PC-9 (cell line): ENCODE measurements at regions of chr9 and their contacts with region 1.

Region 1: DNA sequence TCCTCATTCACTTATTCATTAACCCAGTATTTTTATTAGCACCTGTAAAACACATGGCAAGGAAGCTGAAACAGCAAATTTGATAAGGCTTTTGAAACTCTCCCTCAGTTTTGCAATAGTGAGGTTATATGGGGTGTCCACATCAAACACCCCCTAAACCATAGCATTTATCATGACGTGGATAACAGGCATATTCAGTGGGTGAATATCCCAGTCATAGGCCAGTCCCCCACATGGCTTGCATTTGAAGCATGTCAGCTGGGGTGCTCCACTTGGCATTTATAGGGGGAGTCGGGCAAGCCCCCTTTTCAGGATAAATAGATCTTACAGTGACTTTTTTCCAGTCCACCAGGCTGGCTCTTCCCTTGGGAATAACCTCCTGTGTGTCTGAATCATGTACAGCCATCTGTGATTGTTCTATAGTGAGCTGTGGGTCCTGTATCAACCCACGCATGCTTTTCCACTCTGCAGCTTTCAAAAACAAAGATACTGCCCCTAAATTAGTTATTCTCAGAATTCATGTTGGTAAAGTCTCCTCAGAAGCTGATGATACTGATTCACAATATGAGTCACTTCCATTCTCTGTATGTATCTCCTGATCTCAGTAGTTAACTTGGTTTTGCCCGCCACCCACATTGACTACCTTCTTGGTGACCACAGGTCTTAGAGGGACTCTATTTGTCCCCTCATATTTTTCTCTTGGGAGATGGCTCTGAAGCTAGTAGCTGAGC is 84.4 kb upstream of the SPIN1 start:
- DNase-seq: no peak
- H3K4me3 ChIP-seq: no peak overlapping the region
- H3K27ac ChIP-seq: no peak overlapping the region
- H3K4me1 ChIP-seq: no peaks in the 10 kb centered on the region
- H3K27me3 ChIP-seq: no peaks in the 10 kb centered on the region
- CTCF ChIP-seq: no peak

Region 2: DNA sequence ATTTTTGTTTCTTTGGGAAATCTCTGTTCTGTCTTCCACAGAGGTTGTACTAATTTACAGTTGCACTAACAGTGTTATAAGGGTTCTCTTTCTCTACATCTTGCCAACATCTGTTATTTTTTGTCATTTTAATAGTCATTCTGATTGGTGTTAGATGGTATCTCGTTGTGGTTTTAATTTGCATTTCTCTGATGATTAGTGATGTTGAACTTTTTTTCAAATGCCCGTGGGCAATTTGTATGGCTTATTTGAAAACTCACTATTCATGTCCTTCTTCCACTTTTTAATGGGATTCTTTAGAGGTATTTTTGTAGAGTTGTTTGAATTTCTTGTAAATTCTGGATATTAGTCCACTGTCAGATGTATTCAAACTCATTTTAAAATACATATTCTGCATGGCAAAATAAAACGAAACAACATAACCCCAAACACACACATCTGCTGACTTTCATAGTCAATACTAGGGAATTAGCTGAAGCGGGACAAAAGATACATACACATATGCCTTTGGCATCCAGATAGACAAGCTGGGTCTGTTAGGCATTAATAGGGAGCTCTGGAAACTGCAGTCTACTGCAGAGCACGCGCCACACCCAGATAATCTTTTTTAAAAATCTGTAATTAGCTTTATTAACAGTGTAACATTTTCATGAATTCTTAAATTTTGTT is 159.8 kb before region 1 on chr9:
- CTCF ChIA-PET with region 1: no interaction called
- POLR2A ChIA-PET with region 1: no interaction called
- intact Hi-C with region 1: no loop called
- DNase-seq: no peak
- H3K4me3 ChIP-seq: no peak overlapping the region
- H3K27ac ChIP-seq: no peak overlapping the region
- H3K4me1 ChIP-seq: no peaks in the 10 kb centered on the region
- H3K27me3 ChIP-seq: no peaks in the 10 kb centered on the region
- CTCF ChIP-seq: no peak

Region 3: DNA sequence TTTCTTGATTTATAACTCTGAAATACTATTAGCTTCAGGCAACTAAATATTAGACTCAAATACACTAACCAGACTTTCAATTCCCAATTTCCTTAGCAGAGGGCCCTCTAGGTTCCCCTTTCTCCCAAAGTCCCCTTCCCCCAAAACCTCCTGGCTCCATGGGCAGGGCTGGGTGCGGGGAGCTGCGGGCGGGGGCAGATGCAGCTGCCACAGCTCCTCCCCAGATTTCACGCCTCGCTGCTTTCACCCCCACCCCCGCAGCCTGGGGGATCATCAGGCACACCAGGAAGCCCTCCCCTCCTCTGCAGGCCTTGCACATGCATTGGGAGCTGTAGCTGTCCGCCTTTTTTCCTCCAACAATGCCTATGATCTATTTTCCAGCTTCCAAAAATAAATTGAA is 82.8 kb before region 1 on chr9:
- CTCF ChIA-PET with region 1: no interaction called
- POLR2A ChIA-PET with region 1: interaction called, 12 read pairs
- intact Hi-C with region 1: no loop called
- DNase-seq: no peak
- H3K4me3 ChIP-seq: no peak overlapping the region
- H3K27ac ChIP-seq: no peak overlapping the region
- H3K4me1 ChIP-seq: no peaks in the 10 kb centered on the region
- H3K27me3 ChIP-seq: no peaks in the 10 kb centered on the region
- CTCF ChIP-seq: no peak

Region 4: GRCh38 chr9:88236531-88237478 is 67.1 kb before region 1 on chr9:
- CTCF ChIA-PET with region 1: no interaction called
- POLR2A ChIA-PET with region 1: no interaction called
- intact Hi-C with region 1: no loop called
- DNase-seq: no peak
- H3K4me3 ChIP-seq: no peak overlapping the region
- H3K27ac ChIP-seq: no peak overlapping the region
- H3K4me1 ChIP-seq: no peaks in the 10 kb centered on the region
- H3K27me3 ChIP-seq: no peaks in the 10 kb centered on the region
- CTCF ChIP-seq: no peak